RWPE1 (cell line): ENCODE measurements at regions of chr6 and their contacts with region 1.

Region 1: GRCh38 chr6:90478789-90479602 is 107.9 kb downstream of the MAP3K7 start:
- DNase-seq: peak; percentile 96
- H3K27ac ChIP-seq: no peak overlapping the region
- CTCF ChIP-seq: peak; percentile 85

Region 2: DNA sequence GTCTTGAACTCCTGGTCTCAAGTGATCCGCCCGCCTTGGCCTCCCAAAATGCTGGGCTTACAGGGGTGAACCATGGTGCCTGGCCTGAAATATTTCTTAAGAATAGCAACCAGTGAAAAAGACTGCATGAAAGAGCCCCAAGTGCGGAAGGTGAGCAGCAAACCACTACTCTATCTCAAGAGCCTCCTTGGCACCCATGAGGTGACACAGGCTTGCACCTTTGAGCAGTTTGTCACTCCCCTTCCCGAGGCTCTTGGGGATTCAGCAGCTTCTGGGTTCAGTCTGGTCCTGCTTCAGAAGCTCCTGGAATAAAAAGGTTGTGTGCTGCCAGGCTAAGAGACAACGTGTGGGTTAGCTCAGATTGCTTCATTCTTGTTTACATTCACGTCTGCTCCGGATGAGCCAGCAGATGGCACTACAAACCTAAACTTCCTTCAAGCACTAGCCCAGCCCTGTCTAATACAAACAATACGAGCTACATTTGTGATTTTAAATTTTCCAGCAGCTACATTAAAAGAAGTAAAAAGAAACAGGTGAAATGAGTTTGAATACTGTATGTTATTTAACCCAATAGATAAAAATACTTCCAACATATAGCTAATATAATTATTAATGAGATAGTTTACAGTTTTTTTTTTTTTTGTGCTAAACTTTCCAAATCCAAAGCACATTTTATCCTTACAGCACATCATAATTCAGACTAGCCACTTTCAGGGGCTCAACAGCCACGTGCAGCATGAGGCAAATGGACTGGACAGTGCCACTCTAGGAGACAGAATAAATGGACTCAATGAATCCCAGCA is 538.6 kb before region 1 on chr6:
- CTCF ChIA-PET with region 1: interaction called, 19 read pairs
- POLR2A ChIA-PET with region 1: no interaction called
- DNase-seq: peak; percentile 78
- H3K27ac ChIP-seq: 0 out of 2 replicates have a peak overlapping the region, but pooled peaks have one; percentile 14
- CTCF ChIP-seq: peak; percentile 69

Region 3: DNA sequence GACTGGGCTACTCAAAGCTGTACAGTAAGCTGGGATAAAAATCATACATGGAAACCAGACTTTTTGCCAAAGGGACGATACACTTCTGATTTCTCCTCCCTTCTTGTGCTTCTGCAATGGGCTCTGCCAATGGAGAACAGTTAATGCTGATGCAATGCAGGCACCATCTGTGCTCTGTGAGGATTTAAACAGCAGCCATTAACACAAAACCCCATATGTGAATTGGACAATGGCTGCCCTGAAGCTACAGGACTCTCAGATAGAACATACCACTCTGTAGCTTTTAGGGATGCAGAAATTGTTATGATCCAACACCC is 512.8 kb before region 1 on chr6:
- CTCF ChIA-PET with region 1: interaction called, 10 read pairs
- POLR2A ChIA-PET with region 1: no interaction called
- DNase-seq: no peak
- H3K27ac ChIP-seq: no peak overlapping the region
- CTCF ChIP-seq: no peak

Region 4: GRCh38 chr6:90715093-90715655 is 236.2 kb after region 1 on chr6:
- CTCF ChIA-PET with region 1: no interaction called
- POLR2A ChIA-PET with region 1: no interaction called
- DNase-seq: no peak
- H3K27ac ChIP-seq: no peak overlapping the region
- CTCF ChIP-seq: no peak